ENCODE measurements at regions of chr5 and their contacts with region 1.

Region 1: GRCh38 chr5:40755407-40756365 is at the start of gene TTC33:
- DNase-seq: peak; percentile 88
- ATAC-seq: peak; percentile 93
- H3K4me3 Mint-ChIP-seq: no peak within 1 kb of the TSS
- H3K27ac Mint-ChIP-seq: no peak within 1 kb of the TSS
- H3K4me1 Mint-ChIP-seq: peaks cover 7% of the 10 kb centered on the region
- H3K27me3 Mint-ChIP-seq: no peaks in the 10 kb centered on the region
- CTCF ChIP-seq: no peak
- total RNA-seq, gene TTC33: 9.0 and 9.2 TPM in 2 replicates

Region 2: DNA sequence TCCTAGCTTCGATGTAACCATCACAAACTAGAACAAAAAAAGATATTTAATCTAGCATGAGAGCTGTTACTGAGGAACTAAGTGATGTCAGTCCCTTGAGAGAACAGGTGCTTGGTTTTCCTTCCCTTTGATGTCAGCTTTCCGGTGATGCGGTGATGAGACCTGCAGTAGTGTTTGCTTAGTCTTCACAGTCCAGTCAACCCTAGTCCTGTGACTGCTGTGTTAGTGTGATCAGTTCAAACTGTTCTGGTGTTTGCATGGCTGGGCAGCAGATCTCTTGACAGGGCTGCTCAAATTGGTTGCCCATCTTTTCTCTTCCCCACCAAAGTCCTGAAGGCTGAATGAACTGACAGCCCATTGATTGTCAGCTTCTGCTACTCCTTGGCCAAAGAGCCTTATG is 722.3 kb before region 1 on chr5:
- CTCF ChIA-PET with region 1: no interaction called
- POLR2A ChIA-PET with region 1: no interaction called
- intact Hi-C with region 1: loop called (anchors 5 kb)
- DNase-seq: peak; percentile 31
- ATAC-seq: peak; percentile 98
- H3K4me3 Mint-ChIP-seq: peak overlapping the region; percentile 21
- H3K27ac Mint-ChIP-seq: peak overlapping the region; percentile 80
- H3K4me1 Mint-ChIP-seq: peaks cover 36% of the 10 kb centered on the region
- H3K27me3 Mint-ChIP-seq: no peaks in the 10 kb centered on the region
- CTCF ChIP-seq: no peak

Region 3: GRCh38 chr5:40798012-40798855 is 42.5 kb after region 1 on chr5 and contains the start of gene PRKAA1:
- CTCF ChIA-PET with region 1: no interaction called
- POLR2A ChIA-PET with region 1: interaction called, 7 read pairs
- intact Hi-C with region 1: loop called (anchors 1 kb)
- DNase-seq: peak; percentile 93
- ATAC-seq: peak; percentile 96
- H3K4me3 Mint-ChIP-seq: peak within 1 kb of the TSS; percentile 91
- H3K27ac Mint-ChIP-seq: peak within 1 kb of the TSS; percentile 93
- H3K4me1 Mint-ChIP-seq: peaks cover 41% of the 10 kb centered on the region
- H3K27me3 Mint-ChIP-seq: no peaks in the 10 kb centered on the region
- CTCF ChIP-seq: no peak
- total RNA-seq, gene PRKAA1: 61.9 and 69.4 TPM in 2 replicates

Region 4: DNA sequence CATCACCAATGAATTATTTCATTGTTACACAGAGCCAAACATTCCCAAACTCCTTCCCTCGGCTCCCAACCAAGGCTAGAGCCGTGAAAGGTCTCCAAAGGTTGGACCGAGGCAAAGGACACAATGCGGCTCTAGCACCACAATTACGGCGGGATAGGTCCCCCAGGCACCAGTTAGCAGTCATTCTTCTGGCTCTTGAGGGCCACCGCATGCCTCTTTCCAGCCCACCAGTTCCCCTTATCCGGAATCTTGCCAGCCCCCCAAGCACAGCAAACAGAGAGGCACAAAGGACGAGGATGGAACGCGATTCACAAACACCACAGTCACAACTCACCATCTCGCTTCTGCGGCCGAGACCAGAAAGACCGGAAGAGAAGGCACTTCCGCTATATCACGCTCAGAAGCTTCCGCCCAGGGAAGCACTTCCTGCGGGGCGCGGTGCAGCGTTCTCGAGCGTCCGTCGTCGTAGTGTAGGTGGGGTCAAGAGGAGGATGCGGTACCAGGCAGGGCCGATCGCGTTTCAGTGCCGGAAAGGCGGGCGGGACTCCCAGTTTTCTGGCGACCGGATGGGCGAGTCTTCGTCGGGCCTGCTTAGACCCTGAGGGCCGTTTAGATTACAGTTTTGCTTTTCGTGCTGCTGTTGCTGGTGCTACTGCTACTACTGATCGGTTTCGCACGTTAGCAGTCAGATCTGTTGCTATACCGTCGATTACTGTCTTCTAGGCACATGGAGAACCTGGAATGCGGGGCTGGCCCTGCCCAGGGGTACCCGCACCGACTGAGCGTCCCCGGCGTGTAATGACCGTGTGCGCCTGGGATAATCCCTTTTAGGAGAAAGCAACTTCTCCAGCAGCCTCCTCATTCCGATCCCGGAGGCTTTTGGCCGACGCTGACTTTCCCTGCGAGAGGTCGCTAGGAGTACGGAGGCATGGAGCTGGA is 79.4 kb after region 1 on chr5 and contains the start of gene RPL37:
- CTCF ChIA-PET with region 1: no interaction called
- POLR2A ChIA-PET with region 1: interaction called, 11 read pairs
- intact Hi-C with region 1: loop called (anchors 1 kb)
- DNase-seq: peak; percentile 80
- ATAC-seq: peak; percentile 98
- H3K4me3 Mint-ChIP-seq: peak within 1 kb of the TSS; percentile 100
- H3K27ac Mint-ChIP-seq: peak within 1 kb of the TSS; percentile 99
- H3K4me1 Mint-ChIP-seq: peaks cover 49% of the 10 kb centered on the region
- H3K27me3 Mint-ChIP-seq: no peaks in the 10 kb centered on the region
- CTCF ChIP-seq: no peak
- total RNA-seq, gene RPL37: 2,223 and 2,547 TPM in 2 replicates

Region 5: GRCh38 chr5:40879163-40879942 is 123.7 kb after region 1 on chr5:
- CTCF ChIA-PET with region 1: no interaction called
- POLR2A ChIA-PET with region 1: no interaction called
- intact Hi-C with region 1: loop called (anchors 1 kb)
- DNase-seq: no peak
- ATAC-seq: peak; percentile 28
- H3K4me3 Mint-ChIP-seq: no peak overlapping the region
- H3K27ac Mint-ChIP-seq: no peak overlapping the region
- H3K4me1 Mint-ChIP-seq: no peaks in the 10 kb centered on the region
- H3K27me3 Mint-ChIP-seq: no peaks in the 10 kb centered on the region
- CTCF ChIP-seq: peak; percentile 20